ENCODE measurements at regions of chr7 and their contacts with region 1.

Region 1: DNA sequence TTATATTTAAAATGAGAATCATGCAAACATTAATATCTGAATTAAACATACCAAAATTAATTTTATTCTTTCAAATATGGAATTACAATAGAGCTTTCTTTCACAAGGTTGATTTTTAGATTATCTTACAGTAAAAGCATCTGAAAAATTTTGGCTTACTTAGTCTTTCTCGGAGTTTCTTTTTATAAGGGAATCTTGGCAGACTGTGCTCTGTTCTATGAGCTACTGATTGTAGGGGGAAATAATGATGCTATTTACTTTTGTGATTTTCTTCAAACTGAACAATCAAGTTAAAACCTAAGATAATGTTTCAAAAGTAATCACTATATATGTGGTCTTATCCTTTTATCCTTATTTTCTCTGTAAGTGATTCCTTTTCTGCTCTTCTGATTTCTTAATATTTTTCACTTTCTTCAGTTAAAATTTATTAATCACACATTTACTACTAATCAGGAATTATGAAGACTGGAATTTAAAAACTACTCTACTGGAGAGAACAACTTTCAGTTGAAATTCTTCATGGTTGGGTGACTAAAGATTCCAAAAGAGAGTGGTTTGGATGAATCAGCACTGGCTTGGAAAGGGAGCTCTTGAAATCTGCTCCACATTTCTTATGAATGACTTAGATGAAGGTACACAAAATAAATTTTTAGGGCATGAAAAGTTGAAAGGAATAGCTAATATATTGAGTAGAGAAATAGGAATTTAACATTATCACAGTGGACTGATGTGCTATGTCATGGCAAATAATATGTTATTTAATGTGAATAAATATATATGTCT is 103.9 kb downstream of the PPP1R9A start:
- DNase-seq: peak; percentile 89
- ATAC-seq: peak; percentile 93
- H3K4me3 ChIP-seq: peak overlapping the region; percentile 25; the same call in 1 of the 2 replicates
- H3K27ac ChIP-seq: peak overlapping the region; percentile 84
- H3K4me1 ChIP-seq: peaks cover 23% of the 10 kb centered on the region
- H3K27me3 ChIP-seq: no peaks in the 10 kb centered on the region
- CTCF ChIP-seq: no peak

Region 2: GRCh38 chr7:94975336-94975735 is 36.0 kb before region 1 on chr7:
- CTCF ChIA-PET with region 1: no interaction called
- POLR2A ChIA-PET with region 1: no interaction called
- intact Hi-C with region 1: loop called (anchors 2 kb)
- DNase-seq: peak; percentile 71
- ATAC-seq: peak; percentile 69
- H3K4me3 ChIP-seq: peak overlapping the region; percentile 6; the same call in 1 of the 2 replicates
- H3K27ac ChIP-seq: peak overlapping the region; percentile 27
- H3K4me1 ChIP-seq: peaks cover 53% of the 10 kb centered on the region
- H3K27me3 ChIP-seq: no peaks in the 10 kb centered on the region
- CTCF ChIP-seq: no peak

Region 3: GRCh38 chr7:95028683-95029082 is 17.3 kb after region 1 on chr7:
- CTCF ChIA-PET with region 1: no interaction called
- POLR2A ChIA-PET with region 1: no interaction called
- intact Hi-C with region 1: no loop called
- DNase-seq: no peak
- ATAC-seq: no peak
- H3K4me3 ChIP-seq: no peak overlapping the region
- H3K27ac ChIP-seq: no peak overlapping the region
- H3K4me1 ChIP-seq: no peaks in the 10 kb centered on the region
- H3K27me3 ChIP-seq: no peaks in the 10 kb centered on the region
- CTCF ChIP-seq: no peak

Measured in PC-3 (cell line).